ENCODE measurements at regions of chr11 and their contacts with region 1.

Region 1: DNA sequence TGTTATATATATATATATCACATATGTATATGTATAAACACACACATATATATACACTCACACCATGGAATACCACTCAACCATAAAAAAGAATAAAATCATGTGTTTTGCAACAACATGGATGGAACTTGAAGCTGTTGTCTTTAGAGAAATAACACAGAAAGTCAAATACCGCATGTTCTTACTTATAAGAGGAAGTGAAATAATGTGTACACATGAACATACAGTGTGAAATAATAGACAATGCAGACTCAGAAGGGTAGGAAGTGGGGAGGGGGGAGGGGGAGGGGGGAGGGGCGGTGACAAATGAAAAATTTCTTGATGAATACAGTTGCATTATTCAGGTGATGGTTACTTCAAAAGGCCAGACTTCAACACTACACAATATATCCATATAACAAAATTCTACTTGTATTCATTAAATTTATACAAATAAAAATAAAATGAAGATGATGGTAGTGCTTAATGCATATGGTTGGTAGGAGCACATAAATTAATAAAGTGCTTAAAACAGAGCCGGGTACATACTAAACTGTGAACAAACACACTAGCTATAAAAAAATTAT is 5.8 kb upstream of the OR5B2 start:
- DNase-seq: no peak
- ATAC-seq: no peak
- H3K4me3 ChIP-seq: no peak overlapping the region
- H3K27ac ChIP-seq: no peak overlapping the region
- H3K4me1 ChIP-seq: no peaks in the 10 kb centered on the region
- H3K27me3 ChIP-seq: no peaks in the 10 kb centered on the region
- CTCF ChIP-seq: no peak

Region 2: GRCh38 chr11:57823859-57824258 is 609.9 kb before region 1 on chr11:
- CTCF ChIA-PET with region 1: no interaction called
- POLR2A ChIA-PET with region 1: interaction called, 10 read pairs
- intact Hi-C with region 1: no loop called
- DNase-seq: no peak
- ATAC-seq: no peak
- H3K4me3 ChIP-seq: no peak overlapping the region
- H3K27ac ChIP-seq: no peak overlapping the region
- H3K4me1 ChIP-seq: no peaks in the 10 kb centered on the region
- H3K27me3 ChIP-seq: no peaks in the 10 kb centered on the region
- CTCF ChIP-seq: no peak

Region 3: DNA sequence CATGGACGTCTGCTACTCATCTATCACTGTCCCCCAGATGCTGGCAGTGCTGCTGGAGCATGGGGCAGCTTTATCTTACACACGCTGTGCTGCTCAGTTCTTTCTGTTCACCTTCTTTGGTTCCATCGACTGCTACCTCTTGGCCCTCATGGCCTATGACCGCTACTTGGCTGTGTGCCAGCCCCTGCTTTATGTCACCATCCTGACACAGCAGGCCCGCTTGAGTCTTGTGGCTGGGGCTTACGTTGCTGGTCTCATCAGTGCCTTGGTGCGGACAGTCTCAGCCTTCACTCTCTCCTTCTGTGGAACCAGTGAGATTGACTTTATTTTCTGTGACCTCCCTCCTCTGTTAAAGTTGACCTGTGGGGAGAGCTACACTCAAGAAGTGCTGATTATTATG is 254.1 kb before region 1 on chr11:
- CTCF ChIA-PET with region 1: no interaction called
- POLR2A ChIA-PET with region 1: no interaction called
- intact Hi-C with region 1: no loop called
- DNase-seq: no peak
- ATAC-seq: no peak
- H3K4me3 ChIP-seq: no peak overlapping the region
- H3K27ac ChIP-seq: no peak overlapping the region
- H3K4me1 ChIP-seq: no peaks in the 10 kb centered on the region
- H3K27me3 ChIP-seq: peaks cover 39% of the 10 kb centered on the region
- CTCF ChIP-seq: no peak

Region 4: GRCh38 chr11:58600510-58600909 is 166.8 kb after region 1 on chr11:
- CTCF ChIA-PET with region 1: no interaction called
- POLR2A ChIA-PET with region 1: interaction called, 10 read pairs
- intact Hi-C with region 1: no loop called
- DNase-seq: no peak
- ATAC-seq: no peak
- H3K4me3 ChIP-seq: no peak overlapping the region
- H3K27ac ChIP-seq: no peak overlapping the region
- H3K4me1 ChIP-seq: peaks cover 8% of the 10 kb centered on the region
- H3K27me3 ChIP-seq: no peaks in the 10 kb centered on the region
- CTCF ChIP-seq: no peak

Region 5: GRCh38 chr11:58616594-58616993 is 182.9 kb after region 1 on chr11:
- CTCF ChIA-PET with region 1: no interaction called
- POLR2A ChIA-PET with region 1: no interaction called
- intact Hi-C with region 1: no loop called
- DNase-seq: peak; percentile 96
- ATAC-seq: peak; percentile 98
- H3K4me3 ChIP-seq: no peak overlapping the region
- H3K27ac ChIP-seq: peak overlapping the region; percentile 19; the same call in 1 of the 2 replicates
- H3K4me1 ChIP-seq: peaks cover 22% of the 10 kb centered on the region
- H3K27me3 ChIP-seq: no peaks in the 10 kb centered on the region
- CTCF ChIP-seq: no peak